ENCODE measurements at regions of chr20 and their contacts with region 1.

Region 1: GRCh38 chr20:35826397-35826998 is 54.7 kb downstream of the PHF20 start:
- DNase-seq: no peak
- ATAC-seq: no peak
- H3K4me3 Mint-ChIP-seq: no peak overlapping the region
- H3K27ac Mint-ChIP-seq: peak overlapping the region in 8 of 10 donors; percentile 1 to 81 (median 42)
- H3K4me1 Mint-ChIP-seq: peaks cover 17 to 42% (median 31%) of the 10 kb centered on the region in 4 donors
- H3K27me3 Mint-ChIP-seq: no peaks in the 10 kb centered on the region

Region 2: DNA sequence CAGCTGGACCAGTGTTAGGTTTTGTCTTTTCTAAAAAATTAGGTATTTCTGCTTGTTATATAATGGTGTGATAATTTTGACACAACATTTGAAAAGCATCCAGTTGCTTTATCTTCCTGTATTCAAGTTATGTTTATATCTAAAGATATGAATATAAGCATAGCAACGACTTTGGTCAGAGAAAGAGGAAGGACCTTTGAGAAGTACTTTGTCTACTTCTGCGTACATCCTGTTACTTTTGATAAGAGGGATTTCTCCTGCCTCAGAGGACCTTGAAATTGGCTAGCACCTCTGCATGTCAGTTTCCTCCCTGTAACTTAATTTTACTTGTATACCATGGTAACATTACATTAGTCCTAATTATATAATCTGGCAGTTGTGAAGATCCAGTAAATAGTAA is 29.9 kb before region 1 on chr20:
- POLR2A ChIA-PET with region 1: interaction called, 10 read pairs
- DNase-seq: peak in 6 of 10 donors; percentile 26 to 76 (median 58)
- ATAC-seq: peak; percentile 81 to 95
- H3K4me3 Mint-ChIP-seq: peak overlapping the region; percentile 13 to 79 (median 54)
- H3K27ac Mint-ChIP-seq: peak overlapping the region; percentile 79 to 99 (median 96)
- H3K4me1 Mint-ChIP-seq: peaks cover 12 to 71% (median 56%) of the 10 kb centered on the region in 4 donors
- H3K27me3 Mint-ChIP-seq: no peaks in the 10 kb centered on the region

Measured in naive thymus-derived CD8-positive, alpha-beta T cell (primary cell).